Right ventricle myocardium inferior (tissue), 1 donor: ENCODE measurements at regions of chr5 and their contacts with region 1.

Region 1: DNA sequence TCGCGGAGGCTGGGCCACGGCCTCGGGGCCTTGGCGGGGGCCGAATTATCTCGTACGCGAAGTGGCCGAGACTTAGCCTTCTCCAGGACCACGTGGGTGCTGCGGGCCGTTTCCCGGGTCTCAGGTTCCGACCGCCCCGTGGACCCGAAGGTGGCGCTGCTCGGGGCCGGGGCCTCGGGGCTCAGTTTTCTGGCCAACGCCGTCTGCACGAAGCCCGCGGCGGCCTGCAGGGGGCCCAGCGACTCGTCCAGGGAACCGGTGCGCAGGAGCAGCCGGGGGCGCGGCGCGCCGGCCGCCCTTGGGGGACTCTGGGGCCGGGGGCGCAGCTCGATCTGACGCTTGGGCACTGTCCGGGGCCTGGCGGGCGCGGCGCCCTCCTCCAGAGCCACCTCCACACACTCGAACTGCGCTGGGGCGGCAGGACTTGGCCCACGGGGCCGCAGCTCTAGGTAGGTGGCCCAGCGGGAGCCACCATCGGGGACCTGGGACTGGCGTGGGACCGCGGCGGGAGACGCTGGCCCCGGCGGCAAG is 716 bp downstream of the PROB1 start:
- DNase-seq: no peak
- ATAC-seq: peak; percentile 36

Region 2: DNA sequence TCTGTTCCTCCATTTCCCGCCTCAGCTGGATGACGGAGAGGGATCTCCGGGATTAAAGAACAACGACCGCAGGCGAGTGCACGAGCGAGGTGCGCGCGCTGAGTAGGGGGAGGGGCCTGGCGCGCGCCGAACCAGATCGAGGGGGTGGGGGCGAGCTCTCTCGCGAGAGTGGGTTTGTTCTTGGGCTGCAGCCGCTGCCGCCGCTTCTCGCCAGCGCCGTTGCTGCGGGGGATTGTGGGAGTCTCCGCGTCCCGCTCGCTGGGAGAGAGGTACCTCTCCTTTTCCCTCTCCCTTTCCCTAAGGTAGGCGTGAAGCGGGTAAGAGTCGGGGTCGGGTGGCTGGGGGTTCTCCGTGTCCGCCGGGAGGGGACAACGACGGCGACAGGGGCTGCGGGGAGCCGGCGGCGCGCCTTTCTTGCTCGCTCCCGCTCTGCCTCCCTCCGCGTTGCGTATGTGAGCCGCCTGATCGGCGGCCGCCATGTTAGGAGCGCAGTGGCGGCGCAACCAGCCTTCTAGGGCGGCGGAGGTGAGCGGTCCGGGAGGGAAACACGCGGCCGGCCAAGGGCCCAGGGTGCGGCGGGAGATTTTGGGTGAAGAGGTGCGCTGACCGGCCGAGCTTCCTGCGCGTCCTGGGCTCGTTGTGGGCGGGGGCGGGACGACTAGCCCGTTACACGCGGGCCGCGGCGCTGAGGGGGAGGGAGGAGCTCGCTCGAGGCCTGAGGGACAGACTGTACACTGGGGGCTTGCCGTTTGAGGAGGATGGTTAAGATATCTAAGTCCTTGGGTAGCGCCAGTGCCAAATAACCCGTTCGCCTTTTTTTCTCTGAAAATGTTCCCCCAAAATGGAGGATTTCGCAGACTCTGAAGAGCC is 100.4 kb before region 1 on chr5 and contains the start of gene MATR3:
- intact Hi-C with region 1: loop called (anchors 5 kb)
- DNase-seq: peak; percentile 97
- ATAC-seq: peak; percentile 96
- total RNA-seq, gene MATR3: 120 TPM

Region 3: GRCh38 chr5:139341650-139342422 is 52.4 kb before region 1 on chr5 and contains the start of gene PAIP2:
- intact Hi-C with region 1: loop called (anchors 2 kb)
- DNase-seq: peak; percentile 100
- ATAC-seq: peak; percentile 97
- total RNA-seq, gene PAIP2: 144 TPM

Region 4: GRCh38 chr5:139371482-139372435 is 22.4 kb before region 1 on chr5:
- intact Hi-C with region 1: loop called (anchors 2 kb)
- DNase-seq: no peak
- ATAC-seq: peak; percentile 23

Region 5: DNA sequence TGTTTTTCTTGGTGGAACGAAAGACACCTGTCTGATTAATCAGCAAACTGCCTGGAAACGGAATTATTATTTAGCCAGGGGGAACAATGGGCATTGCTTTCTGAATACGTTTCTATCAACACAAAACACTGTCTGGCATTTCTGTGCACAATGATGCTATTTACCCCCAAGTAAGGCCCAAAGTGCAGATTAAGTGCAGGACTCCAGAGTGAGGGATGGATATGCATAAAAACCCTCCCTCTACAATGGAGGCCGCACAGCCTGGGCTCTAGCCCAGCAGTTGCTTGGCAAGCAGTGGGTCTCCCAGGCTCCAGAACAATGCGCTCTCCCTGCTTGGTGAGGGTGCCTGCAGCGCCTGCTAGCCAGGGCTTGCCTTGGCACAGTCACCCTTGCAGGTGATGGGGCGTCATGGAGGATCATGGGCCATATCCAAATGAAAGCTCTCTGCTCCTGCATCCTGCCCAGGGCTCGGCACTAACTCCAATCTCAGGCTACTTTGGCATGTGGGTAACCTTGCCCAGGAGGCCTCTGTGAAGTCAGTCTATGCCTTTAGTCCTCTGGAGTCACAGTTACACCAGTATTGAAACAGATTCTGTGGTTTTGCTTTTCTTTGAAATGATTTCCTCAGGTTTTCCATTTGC is 21.2 kb after region 1 on chr5:
- intact Hi-C with region 1: loop called (anchors 1 kb)
- DNase-seq: peak; percentile 80
- ATAC-seq: peak; percentile 72

Region 6: GRCh38 chr5:139960723-139961383 is 566.7 kb after region 1 on chr5:
- intact Hi-C with region 1: no loop called
- DNase-seq: no peak
- ATAC-seq: no peak